ENCODE measurements at regions of chr13 and their contacts with region 1.

Region 1: GRCh38 chr13:76886292-76887075 is at the start of gene KCTD12:
- DNase-seq: peak; percentile 79
- ATAC-seq: peak; percentile 78
- H3K4me3 Mint-ChIP-seq: peak within 1 kb of the TSS; percentile 88
- H3K27ac Mint-ChIP-seq: peak within 1 kb of the TSS; percentile 72
- H3K4me1 Mint-ChIP-seq: peaks cover 24% of the 10 kb centered on the region
- H3K27me3 Mint-ChIP-seq: no peaks in the 10 kb centered on the region
- CTCF ChIP-seq: no peak
- total RNA-seq, gene KCTD12: 4.5 and 5.5 TPM in 2 replicates

Region 2: GRCh38 chr13:75549262-75550158 is 1337.0 kb before region 1 on chr13 and contains the start of gene UCHL3:
- CTCF ChIA-PET with region 1: no interaction called
- POLR2A ChIA-PET with region 1: no interaction called
- intact Hi-C with region 1: loop called (anchors 2 kb)
- DNase-seq: peak; percentile 96
- ATAC-seq: peak; percentile 94
- H3K4me3 Mint-ChIP-seq: peak within 1 kb of the TSS; percentile 98
- H3K27ac Mint-ChIP-seq: peak within 1 kb of the TSS; percentile 99
- H3K4me1 Mint-ChIP-seq: peaks cover 39% of the 10 kb centered on the region
- H3K27me3 Mint-ChIP-seq: no peaks in the 10 kb centered on the region
- CTCF ChIP-seq: no peak
- total RNA-seq, gene UCHL3: 21.9 and 22.7 TPM in 2 replicates

Region 3: DNA sequence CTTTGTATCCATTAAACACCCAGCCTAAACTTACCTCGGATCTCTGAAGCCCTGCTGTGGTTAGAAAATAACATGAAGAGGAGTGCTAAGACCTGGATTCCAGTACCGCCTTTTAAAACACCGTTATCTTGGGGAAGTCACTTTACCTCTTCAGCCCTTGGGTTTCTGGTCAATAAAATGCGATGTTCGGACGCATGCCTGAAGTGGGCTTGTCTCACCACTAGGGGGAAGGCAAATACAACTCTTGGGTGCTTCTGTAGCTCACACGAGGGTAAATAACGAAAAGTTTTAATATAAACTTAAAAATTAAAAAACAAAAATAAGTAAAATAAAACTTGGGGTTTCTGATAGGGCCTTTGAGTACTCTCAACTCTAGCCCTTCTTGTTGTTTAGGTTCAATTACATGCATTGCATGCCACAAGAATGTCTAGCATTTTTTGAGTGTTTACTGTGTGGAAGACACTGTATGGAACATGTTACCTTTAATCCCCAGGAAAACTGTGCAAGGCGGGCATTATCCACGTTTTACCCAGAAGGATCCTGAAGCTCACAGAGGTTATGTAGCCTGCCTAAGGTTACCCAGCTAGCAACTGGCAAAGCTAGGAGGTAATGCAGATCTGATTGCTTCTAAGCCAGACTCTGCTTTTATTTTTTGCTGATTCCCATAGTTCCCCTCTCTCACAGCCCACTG is 1010.0 kb before region 1 on chr13:
- CTCF ChIA-PET with region 1: interaction called, 12 read pairs
- POLR2A ChIA-PET with region 1: no interaction called
- intact Hi-C with region 1: loop called (anchors 5 kb)
- DNase-seq: no peak
- ATAC-seq: peak; percentile 81
- H3K4me3 Mint-ChIP-seq: no peak overlapping the region
- H3K27ac Mint-ChIP-seq: no peak overlapping the region
- H3K4me1 Mint-ChIP-seq: peaks cover 2% of the 10 kb centered on the region
- H3K27me3 Mint-ChIP-seq: peaks cover 13% of the 10 kb centered on the region
- CTCF ChIP-seq: no peak

Region 4: GRCh38 chr13:76637641-76638141 is 248.8 kb before region 1 on chr13:
- CTCF ChIA-PET with region 1: no interaction called
- POLR2A ChIA-PET with region 1: no interaction called
- intact Hi-C with region 1: no loop called
- DNase-seq: no peak
- ATAC-seq: no peak
- H3K4me3 Mint-ChIP-seq: no peak overlapping the region
- H3K27ac Mint-ChIP-seq: no peak overlapping the region
- H3K4me1 Mint-ChIP-seq: no peaks in the 10 kb centered on the region
- H3K27me3 Mint-ChIP-seq: peaks cover 2% of the 10 kb centered on the region
- CTCF ChIP-seq: no peak

Region 5: GRCh38 chr13:76687467-76687866 is 199.0 kb before region 1 on chr13:
- CTCF ChIA-PET with region 1: no interaction called
- POLR2A ChIA-PET with region 1: no interaction called
- intact Hi-C with region 1: no loop called
- DNase-seq: no peak
- ATAC-seq: no peak
- H3K4me3 Mint-ChIP-seq: no peak overlapping the region
- H3K27ac Mint-ChIP-seq: no peak overlapping the region
- H3K4me1 Mint-ChIP-seq: no peaks in the 10 kb centered on the region
- H3K27me3 Mint-ChIP-seq: no peaks in the 10 kb centered on the region
- CTCF ChIP-seq: no peak

Region 6: DNA sequence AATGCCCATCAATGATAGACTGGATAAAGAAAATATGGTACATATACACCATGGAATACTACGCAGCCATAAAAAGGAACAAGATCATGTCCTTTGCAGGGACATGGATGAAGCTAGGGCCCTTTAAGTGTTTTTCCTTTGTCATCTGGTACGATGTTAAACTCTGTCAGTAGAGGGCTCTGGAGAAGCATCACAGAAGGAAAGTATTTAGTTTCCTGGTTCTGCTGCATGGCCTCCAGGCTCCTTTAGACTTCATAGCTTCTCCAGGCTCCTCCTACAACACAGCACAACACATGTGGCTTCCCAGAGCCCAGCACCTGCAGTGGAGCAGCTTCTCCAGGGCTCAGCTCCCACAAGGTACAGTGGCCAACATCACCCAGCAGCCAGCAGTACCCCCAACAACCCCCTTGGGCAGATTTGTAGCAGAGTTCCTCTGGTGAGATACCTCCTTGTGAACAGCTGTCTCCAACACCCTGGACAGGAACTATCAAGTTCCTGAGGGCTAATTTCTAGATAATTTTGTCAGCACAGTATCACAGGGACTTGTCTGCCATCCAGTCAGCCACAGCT is 63.7 kb before region 1 on chr13:
- CTCF ChIA-PET with region 1: interaction called, 5 read pairs
- POLR2A ChIA-PET with region 1: interaction called, 4 read pairs
- intact Hi-C with region 1: loop called (anchors 5 kb)
- DNase-seq: no peak
- ATAC-seq: no peak
- H3K4me3 Mint-ChIP-seq: no peak overlapping the region
- H3K27ac Mint-ChIP-seq: no peak overlapping the region
- H3K4me1 Mint-ChIP-seq: no peaks in the 10 kb centered on the region
- H3K27me3 Mint-ChIP-seq: peaks cover 2% of the 10 kb centered on the region
- CTCF ChIP-seq: no peak

Region 7: DNA sequence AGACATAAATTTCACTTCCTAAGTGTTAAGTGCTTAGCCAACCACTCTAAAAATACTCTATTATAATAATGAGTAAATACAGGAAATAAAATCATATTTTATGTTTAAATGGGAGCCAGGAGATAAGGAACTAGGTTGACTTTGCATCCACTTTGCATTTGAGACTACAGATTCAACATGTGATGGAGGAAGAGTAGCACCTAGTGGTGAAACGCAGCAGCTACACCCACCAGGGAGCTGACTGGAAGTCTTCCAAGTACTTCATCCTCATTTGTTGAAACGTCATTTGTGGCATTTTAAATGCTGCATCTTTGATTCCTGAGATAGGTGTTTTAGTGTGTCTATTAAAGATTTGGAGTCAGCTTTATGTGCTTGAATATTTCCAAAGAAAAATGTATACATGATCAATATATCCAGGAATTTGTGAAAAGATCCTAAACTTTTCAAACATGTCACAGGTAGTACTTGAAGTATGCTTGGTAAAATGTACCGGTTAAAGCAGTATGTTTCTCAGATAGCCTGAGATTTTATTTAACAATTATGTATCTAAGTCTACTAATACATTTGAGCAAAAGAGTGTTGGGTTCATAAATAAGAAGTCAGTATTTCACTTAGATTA is 17.2 kb after region 1 on chr13:
- CTCF ChIA-PET with region 1: interaction called, 12 read pairs
- POLR2A ChIA-PET with region 1: interaction called, 4 read pairs
- intact Hi-C with region 1: no loop called
- DNase-seq: no peak
- ATAC-seq: peak; percentile 89
- H3K4me3 Mint-ChIP-seq: no peak overlapping the region
- H3K27ac Mint-ChIP-seq: no peak overlapping the region
- H3K4me1 Mint-ChIP-seq: no peaks in the 10 kb centered on the region
- H3K27me3 Mint-ChIP-seq: peaks cover 17% of the 10 kb centered on the region
- CTCF ChIP-seq: peak; percentile 83

Region 8: DNA sequence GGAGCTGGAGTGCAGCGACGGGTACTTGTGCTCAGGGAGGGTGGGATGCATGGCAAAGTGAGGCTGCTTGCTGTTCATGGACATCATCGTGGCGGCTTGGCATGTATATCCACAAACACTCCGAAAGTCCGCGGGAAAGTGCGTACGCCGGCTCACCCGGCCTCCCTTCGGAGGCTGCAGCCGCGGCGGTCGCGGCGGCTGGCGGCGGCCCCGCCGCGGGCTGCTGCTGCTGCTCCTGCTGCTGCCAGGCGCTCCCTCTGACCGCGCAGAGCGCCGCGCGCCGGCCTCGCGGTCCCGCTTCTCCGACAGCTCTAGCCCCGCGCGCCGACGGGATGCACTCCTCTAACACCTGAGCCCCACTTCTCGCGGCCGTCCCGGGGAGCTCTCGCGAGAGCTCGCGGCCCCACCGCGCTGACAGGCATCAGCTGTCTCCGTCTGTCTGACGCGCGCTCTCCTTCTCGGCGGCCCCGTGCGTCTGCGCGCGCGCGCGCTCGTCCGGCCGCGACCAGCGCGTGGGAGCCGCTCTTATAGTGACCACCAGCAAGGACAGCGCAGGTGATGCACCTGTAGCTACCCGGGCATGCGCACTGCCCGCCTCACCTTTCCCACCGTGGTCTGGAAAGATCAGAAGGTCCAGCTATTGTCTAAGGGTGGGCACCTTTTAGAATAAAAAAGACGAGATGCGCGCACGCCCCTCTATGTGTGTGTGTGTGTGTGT is 1716.9 kb after region 1 on chr13 and contains the start of gene POU4F1:
- CTCF ChIA-PET with region 1: no interaction called
- POLR2A ChIA-PET with region 1: no interaction called
- intact Hi-C with region 1: loop called (anchors 10 kb)
- DNase-seq: no peak
- ATAC-seq: peak; percentile 80
- H3K4me3 Mint-ChIP-seq: peak within 1 kb of the TSS; percentile 77
- H3K27ac Mint-ChIP-seq: peak within 1 kb of the TSS; percentile 71
- H3K4me1 Mint-ChIP-seq: peaks cover 54% of the 10 kb centered on the region
- H3K27me3 Mint-ChIP-seq: peaks cover 74% of the 10 kb centered on the region
- CTCF ChIP-seq: no peak
- total RNA-seq, gene POU4F1: 0.04 and 0.07 TPM in 2 replicates